H1 (cell line): ENCODE measurements at regions of chr6 and their contacts with region 1.

Region 1: DNA sequence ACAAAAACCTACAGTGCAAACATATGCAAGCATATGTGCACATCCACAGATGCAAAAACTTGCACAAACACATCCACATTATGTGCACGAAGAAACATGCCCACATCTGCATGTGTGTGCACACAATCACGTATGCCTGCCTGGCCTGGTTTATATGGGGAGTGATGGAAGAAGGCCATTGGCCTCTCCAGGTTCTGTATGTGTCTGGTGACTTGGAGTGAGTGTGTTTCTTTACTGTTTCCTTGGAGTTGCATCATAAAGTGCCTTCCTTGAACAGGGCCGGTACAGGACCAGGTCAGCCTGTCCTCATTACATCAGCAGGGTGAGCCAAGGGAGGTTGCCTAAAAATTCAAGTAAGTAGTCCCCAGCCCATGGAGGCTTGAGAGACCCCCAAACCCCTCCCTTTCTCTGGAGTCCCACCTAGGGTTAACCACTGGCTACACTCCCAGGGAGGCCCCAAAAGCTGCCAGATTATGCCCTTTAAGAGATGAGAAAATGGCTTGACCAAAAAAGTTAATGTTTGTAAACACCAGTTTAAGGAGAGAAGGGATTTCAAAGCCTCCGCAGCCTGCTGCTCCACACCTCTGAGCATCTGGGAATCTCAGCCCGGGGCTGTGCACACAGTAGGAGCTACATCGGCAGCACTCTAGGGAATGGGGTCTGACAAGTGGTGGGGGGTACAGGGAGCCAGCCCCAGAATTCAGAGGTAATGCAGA is 140.8 kb downstream of the VEGFA start:
- DNase-seq: no peak
- H3K4me3 ChIP-seq: no peak overlapping the region
- H3K27ac ChIP-seq: no peak overlapping the region
- H3K4me1 ChIP-seq: peaks cover 0 to 20% (median 11%) of the 10 kb centered on the region in 4 experiments; a peak in 6 of 7 replicates
- H3K27me3 ChIP-seq: no peaks in the 10 kb centered on the region
- CTCF ChIP-seq: no peak
- EP300 ChIP-seq: no peak
- POLR2A ChIP-seq: no peak
- RAD21 ChIP-seq: no peak

Region 2: GRCh38 chr6:43593938-43594337 is 316.9 kb before region 1 on chr6:
- CTCF ChIA-PET with region 1: no interaction called
- POLR2A ChIA-PET with region 1: no interaction called
- DNase-seq: no peak
- H3K4me3 ChIP-seq: no peak overlapping the region
- H3K27ac ChIP-seq: no peak overlapping the region
- H3K4me1 ChIP-seq: no peaks in the 10 kb centered on the region
- H3K27me3 ChIP-seq: no peaks in the 10 kb centered on the region
- CTCF ChIP-seq: no peak
- EP300 ChIP-seq: no peak
- POLR2A ChIP-seq: no peak
- RAD21 ChIP-seq: no peak

Region 3: DNA sequence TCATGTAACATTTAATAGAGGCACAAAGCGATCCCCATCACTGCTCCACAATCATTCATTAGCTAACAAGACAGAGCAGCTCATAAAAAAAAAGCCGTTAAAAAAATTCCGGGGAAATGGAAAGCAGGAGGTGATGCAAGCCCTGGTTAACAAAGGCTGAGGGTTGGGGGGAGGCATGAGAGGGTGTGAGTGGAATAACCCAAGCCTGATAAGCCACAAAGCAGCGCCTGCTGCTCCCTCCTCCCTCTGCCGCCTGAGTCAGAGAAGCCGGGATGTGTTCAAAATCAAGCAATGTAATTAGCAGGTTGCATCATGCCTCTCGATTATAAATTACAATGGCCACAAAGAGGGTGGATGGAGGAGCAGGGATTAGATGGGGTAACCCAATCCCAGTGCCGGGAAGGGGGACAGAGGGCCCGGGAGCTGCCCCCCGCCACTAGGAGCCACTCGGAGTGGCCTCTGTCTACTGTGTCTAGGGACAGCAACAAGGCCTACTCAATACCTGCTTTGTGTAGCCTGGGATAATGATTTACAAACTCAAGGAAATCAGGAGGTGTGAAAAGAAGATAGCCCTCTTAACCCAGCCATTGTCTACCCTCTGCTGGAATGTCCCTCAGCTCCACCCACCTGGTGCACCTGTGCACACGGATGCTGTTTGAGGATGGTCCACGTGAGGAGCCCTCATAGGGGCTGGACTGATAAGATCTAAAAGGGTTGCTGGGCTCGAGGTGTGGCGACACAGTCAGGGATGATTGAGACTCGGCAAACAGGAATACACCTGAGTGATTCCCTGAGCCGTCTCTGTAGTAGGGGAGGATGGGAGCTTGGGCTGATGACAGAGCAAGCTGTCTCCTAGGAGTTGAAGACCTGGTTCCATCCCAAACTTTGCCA is 16.1 kb after region 1 on chr6:
- CTCF ChIA-PET with region 1: interaction called, 12 read pairs
- POLR2A ChIA-PET with region 1: interaction called, 32 read pairs
- DNase-seq: peak in 1 of 2 experiments; percentile 62
- H3K4me3 ChIP-seq: no peak overlapping the region
- H3K27ac ChIP-seq: no peak overlapping the region; the same call in 1 of the 2 replicates
- H3K4me1 ChIP-seq: peaks cover 0 to 10% (median 5%) of the 10 kb centered on the region in 4 experiments; a peak in 5 of 7 replicates
- H3K27me3 ChIP-seq: no peaks in the 10 kb centered on the region
- CTCF ChIP-seq: peak in 1 of 3 experiments; percentile 6; a peak in 1 of 4 replicates
- EP300 ChIP-seq: peak in 1 of 2 experiments; percentile 23; a peak in 1 of 3 replicates
- POLR2A ChIP-seq: no peak; a peak in 1 of 3 replicates
- RAD21 ChIP-seq: no peak

Region 4: DNA sequence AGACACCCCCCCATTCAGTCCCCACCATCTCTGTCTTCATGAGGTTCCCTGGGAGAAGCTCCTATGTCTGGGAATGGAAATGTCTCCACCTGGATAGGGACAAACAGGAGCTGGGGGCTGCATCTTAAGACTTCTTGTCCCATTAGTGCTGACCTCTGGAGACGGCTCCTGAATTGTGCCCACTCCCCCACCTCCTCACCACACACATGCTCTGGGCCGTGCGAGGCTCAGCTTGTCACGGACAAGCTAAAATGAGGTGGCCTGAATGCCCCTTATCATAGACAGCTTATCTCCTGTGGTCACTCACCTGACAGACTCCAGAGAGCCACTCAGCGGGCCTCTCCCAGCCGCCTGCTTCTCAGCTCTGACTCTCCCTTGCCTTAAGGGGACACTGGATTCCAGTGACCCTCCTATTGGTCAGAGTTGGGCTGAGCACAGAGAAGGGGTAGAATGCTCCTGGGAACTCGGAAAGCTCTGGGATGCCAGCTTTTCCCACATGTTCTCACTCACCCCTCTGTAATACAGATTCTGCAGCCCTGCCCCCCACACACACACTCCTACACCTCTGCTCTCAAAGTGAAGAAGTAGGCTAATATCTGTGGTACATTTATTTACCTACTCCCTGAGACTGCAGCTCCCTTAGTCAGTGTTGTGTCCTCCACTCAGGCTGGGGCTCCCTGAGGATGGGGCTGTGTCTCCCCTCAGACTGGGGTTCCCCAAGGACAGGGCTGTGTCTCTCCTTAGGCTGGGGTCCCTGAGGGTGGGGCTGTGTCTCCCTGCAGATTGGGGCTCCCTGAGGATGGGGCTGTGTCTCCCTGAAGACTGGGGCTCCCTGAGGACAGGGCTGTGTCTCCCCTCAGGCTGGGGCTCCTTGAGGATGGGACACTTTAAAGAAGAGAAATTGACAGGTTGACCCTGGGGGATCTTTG is 26.7 kb after region 1 on chr6:
- CTCF ChIA-PET with region 1: interaction called, 10 read pairs
- POLR2A ChIA-PET with region 1: interaction called, 3 read pairs
- DNase-seq: no peak
- H3K4me3 ChIP-seq: no peak overlapping the region
- H3K27ac ChIP-seq: no peak overlapping the region
- H3K4me1 ChIP-seq: peaks cover 0 to 16% (median under 1%) of the 10 kb centered on the region in 4 experiments; a peak in 4 of 7 replicates
- H3K27me3 ChIP-seq: no peaks in the 10 kb centered on the region; a peak in 1 of 7 replicates
- CTCF ChIP-seq: no peak
- EP300 ChIP-seq: no peak
- POLR2A ChIP-seq: no peak
- RAD21 ChIP-seq: no peak